Ascending aorta (tissue), 2 donors: ENCODE measurements at regions of chr7 and their contacts with region 1.

Region 1: DNA sequence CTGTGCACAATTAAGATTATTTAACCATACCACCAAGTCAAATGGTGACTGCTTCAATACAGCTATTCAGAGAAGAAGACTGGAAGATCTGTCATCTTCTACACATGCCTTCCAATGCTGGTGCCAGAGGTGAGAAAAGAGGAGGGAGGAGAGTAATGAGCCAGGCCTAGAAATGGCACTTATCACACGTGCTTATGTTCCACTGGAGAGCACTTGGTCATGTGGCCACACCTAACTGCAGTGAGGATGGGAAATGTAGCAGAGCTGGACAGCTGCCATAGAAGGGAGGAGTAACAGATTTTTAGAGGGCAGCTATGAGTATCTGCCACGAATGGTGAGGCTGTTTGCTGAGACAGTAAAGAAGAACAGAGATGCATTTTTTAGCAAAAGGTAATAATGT is 77.1 kb downstream of the MPLKIP start:
- DNase-seq: no peak
- H3K4me3 ChIP-seq: no peak overlapping the region
- H3K27ac ChIP-seq: no peak overlapping the region
- H3K4me1 ChIP-seq: no peaks in the 10 kb centered on the region
- H3K27me3 ChIP-seq: no peaks in the 10 kb centered on the region
- CTCF ChIP-seq: no peak

Region 2: DNA sequence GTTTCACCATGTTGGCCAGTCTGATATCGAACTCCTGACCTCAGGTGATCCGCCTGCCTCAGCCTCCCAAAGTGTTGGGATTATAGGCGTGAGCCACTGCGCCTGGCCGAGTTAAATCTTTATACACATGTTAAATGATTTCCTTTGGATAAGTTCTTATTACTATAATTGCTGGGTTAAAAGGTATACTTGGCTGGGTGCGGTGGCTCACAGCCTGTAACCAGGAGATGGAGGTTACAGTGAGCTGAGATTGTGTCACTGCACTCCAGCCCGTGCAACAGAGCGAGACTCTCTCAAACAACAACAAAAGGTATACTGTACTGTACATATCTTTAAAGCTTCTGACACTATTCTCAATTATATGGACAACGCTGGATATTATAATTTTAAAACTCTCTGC is 160.5 kb before region 1 on chr7:
- intact Hi-C with region 1: loop called (anchors 1 kb)
- DNase-seq: no peak
- H3K4me3 ChIP-seq: no peak overlapping the region
- H3K27ac ChIP-seq: no peak overlapping the region
- H3K4me1 ChIP-seq: no peaks in the 10 kb centered on the region
- H3K27me3 ChIP-seq: no peaks in the 10 kb centered on the region
- CTCF ChIP-seq: no peak

Region 3: GRCh38 chr7:39987476-39988347 is 69.6 kb before region 1 on chr7:
- intact Hi-C with region 1: no loop called
- DNase-seq: no peak
- H3K4me3 ChIP-seq: no peak overlapping the region
- H3K27ac ChIP-seq: no peak overlapping the region
- H3K4me1 ChIP-seq: peaks cover 0 to 5% of the 10 kb centered on the region in 2 donors
- H3K27me3 ChIP-seq: no peaks in the 10 kb centered on the region
- CTCF ChIP-seq: no peak

Region 4: GRCh38 chr7:40105879-40106473 is 48.7 kb after region 1 on chr7:
- intact Hi-C with region 1: no loop called
- DNase-seq: no peak
- H3K4me3 ChIP-seq: no peak overlapping the region
- H3K27ac ChIP-seq: no peak overlapping the region
- H3K4me1 ChIP-seq: peaks cover 0 to 5% of the 10 kb centered on the region in 2 donors
- H3K27me3 ChIP-seq: no peaks in the 10 kb centered on the region
- CTCF ChIP-seq: no peak